ENCODE measurements at regions of chr16 and their contacts with region 1.

Region 1: DNA sequence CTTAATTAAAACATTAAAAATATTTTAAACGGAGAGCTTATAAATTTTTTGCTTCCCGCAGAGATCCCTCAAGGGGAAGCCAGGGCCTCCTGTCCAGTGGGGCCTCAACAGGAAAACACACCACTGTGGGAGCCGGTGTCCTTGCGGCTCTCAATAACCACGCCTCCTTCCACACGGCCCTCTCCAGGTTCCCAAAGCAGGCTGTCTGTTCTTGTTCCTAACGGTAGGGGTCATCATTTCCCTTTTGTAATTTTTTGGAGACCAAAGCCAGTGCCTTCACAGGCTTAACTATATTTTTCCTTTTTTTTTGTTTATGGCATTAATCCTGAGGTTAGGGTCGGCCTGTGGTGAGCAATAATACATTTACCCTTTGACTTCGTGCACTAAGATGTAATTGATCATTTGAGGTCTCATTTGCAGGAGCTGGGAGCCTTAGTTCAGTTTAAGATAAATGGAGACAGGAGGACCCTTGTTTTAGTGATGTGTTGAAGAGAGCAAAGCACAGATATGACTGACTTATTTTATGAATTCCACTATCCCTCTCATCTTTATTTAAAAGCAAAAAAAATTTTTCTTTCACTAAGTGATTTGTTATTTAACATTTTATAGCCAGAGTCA is 77.5 kb upstream of the N4BP1 start:
- DNase-seq: peak; percentile 74
- H3K4me3 ChIP-seq: no peak overlapping the region
- H3K27ac ChIP-seq: no peak overlapping the region
- H3K4me1 ChIP-seq: peaks cover 0 to 9% (median 2%) of the 10 kb centered on the region in 6 donors
- H3K27me3 ChIP-seq: peaks cover 0 to 11% (median 0%) of the 10 kb centered on the region in 7 donors
- CTCF ChIP-seq: peak; percentile 29 to 84 (median 73)
- POLR2A ChIP-seq: no peak

Region 2: GRCh38 chr16:48641770-48642169 is 45.8 kb before region 1 on chr16:
- intact Hi-C with region 1: no loop called
- DNase-seq: no peak
- H3K4me3 ChIP-seq: no peak overlapping the region
- H3K27ac ChIP-seq: no peak overlapping the region
- H3K4me1 ChIP-seq: no peaks in the 10 kb centered on the region
- H3K27me3 ChIP-seq: peaks cover 0 to 7% (median 0%) of the 10 kb centered on the region in 7 donors
- CTCF ChIP-seq: no peak
- POLR2A ChIP-seq: no peak

Region 3: DNA sequence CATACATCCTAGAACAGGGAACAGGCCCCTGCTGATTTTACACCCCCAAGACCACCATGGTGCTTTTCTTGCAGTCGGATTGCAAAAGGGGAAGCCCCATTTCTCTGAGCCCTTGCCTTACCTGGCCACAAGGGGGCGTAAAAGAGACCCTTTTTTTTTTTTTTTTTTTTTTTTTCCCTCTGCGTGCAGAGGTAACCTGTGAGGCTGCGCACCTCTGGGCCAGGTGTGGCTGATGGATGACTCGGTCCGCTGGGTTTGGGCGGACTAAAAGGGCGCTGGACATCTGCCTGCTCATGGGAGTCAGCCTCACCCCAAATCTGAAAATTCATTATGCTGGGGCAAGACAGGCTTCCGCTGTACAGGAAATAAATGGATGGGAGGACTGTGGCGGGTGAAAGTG is 313.1 kb after region 1 on chr16:
- intact Hi-C with region 1: no loop called
- DNase-seq: no peak
- H3K4me3 ChIP-seq: no peak overlapping the region
- H3K27ac ChIP-seq: no peak overlapping the region
- H3K4me1 ChIP-seq: no peaks in the 10 kb centered on the region
- H3K27me3 ChIP-seq: peaks cover 0 to 13% (median 0%) of the 10 kb centered on the region in 7 donors
- CTCF ChIP-seq: peak in 2 of 11 experiments; percentile 21 to 22
- POLR2A ChIP-seq: no peak

Region 4: DNA sequence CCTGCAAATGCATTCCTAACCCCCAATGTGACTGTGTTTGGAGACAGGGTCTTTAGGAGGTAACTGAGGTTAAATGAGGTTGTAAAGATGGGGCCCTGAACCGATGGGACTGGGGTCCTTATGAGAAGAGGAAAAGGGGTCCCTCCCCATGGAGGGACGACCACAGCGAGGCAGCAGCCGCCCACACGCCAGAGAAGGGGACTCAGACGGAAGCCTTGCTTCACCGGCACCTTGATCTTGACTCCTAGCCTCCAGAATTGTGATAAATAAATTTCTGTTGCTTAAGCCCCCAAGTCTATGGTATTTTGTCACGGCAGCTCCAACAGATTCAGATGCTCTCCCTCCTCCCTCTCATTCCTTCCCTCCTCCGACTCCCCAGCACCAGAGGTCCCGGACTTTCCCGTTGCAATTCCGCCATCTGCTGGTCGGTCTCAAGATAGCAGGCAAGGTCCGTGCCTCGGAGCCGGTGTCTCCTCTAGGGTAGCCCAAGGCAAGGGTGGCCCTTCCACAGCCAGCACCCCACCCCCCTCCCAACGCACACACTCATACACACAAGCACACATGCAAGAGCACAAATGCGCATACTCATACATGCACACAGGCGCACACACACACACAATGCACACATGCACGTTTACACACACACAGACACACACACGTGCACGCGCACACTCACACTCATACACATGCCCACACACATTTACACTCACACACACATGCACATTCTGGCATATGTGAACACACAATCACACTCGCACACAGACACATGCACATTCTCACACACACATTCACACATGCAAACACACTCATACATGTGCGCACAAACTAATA is 663.0 kb after region 1 on chr16:
- intact Hi-C with region 1: loop called (anchors 5 kb)
- DNase-seq: no peak
- H3K4me3 ChIP-seq: no peak overlapping the region
- H3K27ac ChIP-seq: no peak overlapping the region
- H3K4me1 ChIP-seq: peaks cover 0 to 19% (median 5%) of the 10 kb centered on the region in 6 donors
- H3K27me3 ChIP-seq: peaks cover 0 to 50% (median 4%) of the 10 kb centered on the region in 7 donors
- CTCF ChIP-seq: peak; percentile 50 to 83 (median 71)
- POLR2A ChIP-seq: no peak

Measured in spleen (tissue), 13 donors.